Natural killer cell (primary cell): ENCODE measurements at regions of chr3 and their contacts with region 1.

Region 1: GRCh38 chr3:46953234-46954010 is 23.1 kb downstream of the CCDC12 start:
- DNase-seq: peak in 1 of 2 donors; percentile 57
- ATAC-seq: peak; percentile 3 to 48 (median 10)
- H3K4me3 ChIP-seq: no peak overlapping the region
- H3K4me3 Mint-ChIP-seq: peak overlapping the region; percentile 78
- H3K27ac ChIP-seq: peak overlapping the region; percentile 94
- H3K27ac Mint-ChIP-seq: peak overlapping the region; percentile 94 to 99
- H3K4me1 ChIP-seq: peaks cover 98% of the 10 kb centered on the region
- H3K4me1 Mint-ChIP-seq: peaks cover 89 to 95% of the 10 kb centered on the region in 2 donors
- H3K27me3 ChIP-seq: no peaks in the 10 kb centered on the region
- H3K27me3 Mint-ChIP-seq: no peaks in the 10 kb centered on the region
- CTCF ChIP-seq: no peak

Region 2: DNA sequence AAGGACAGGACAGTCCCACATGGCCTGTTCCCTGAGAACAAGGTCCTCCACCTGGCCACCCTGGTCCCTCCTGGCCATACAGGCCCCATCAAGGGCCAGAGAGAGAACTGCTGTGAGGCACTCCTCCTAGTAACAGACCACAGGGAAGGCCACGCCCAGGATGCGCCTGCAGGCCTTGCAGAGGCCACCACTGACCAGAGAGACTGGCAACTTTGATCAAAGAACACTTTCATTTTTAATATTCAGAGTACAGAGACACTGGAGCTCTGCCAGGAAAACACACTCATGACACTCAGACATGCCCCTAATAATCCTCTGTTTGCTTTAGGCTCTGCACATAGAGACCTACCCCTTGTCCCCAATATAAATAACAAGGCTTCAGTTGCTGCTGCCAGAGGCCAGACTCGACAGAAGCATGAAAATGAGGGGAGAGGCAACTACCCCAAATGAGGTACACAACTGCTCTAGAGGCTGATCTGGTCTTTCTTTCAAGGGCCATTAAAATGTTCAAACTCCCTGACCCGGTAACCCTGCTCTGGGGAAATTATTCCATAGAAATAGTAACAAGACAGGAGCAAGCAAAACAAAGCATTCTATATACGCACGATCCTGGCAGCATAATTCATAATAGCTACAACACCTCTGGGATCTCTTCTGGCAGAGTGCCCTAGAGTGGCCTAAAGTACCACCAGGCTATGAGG is 21.6 kb before region 1 on chr3:
- intact Hi-C with region 1: loop called (anchors 2 kb)
- DNase-seq: no peak
- ATAC-seq: peak; percentile 18 to 64 (median 42)
- H3K4me3 ChIP-seq: no peak overlapping the region
- H3K4me3 Mint-ChIP-seq: peak overlapping the region; percentile 82
- H3K27ac ChIP-seq: peak overlapping the region; percentile 82
- H3K27ac Mint-ChIP-seq: peak overlapping the region; percentile 88 to 95
- H3K4me1 ChIP-seq: peaks cover 81% of the 10 kb centered on the region
- H3K4me1 Mint-ChIP-seq: peaks cover 63 to 67% of the 10 kb centered on the region in 2 donors
- H3K27me3 ChIP-seq: no peaks in the 10 kb centered on the region
- H3K27me3 Mint-ChIP-seq: no peaks in the 10 kb centered on the region
- CTCF ChIP-seq: no peak

Region 3: GRCh38 chr3:46965151-46965550 is 11.7 kb after region 1 on chr3:
- intact Hi-C with region 1: no loop called
- DNase-seq: no peak
- ATAC-seq: peak; percentile 39 to 65 (median 56)
- H3K4me3 ChIP-seq: no peak overlapping the region
- H3K4me3 Mint-ChIP-seq: no peak overlapping the region
- H3K27ac ChIP-seq: no peak overlapping the region
- H3K27ac Mint-ChIP-seq: peak overlapping the region; percentile 73 to 93
- H3K4me1 ChIP-seq: peaks cover 63% of the 10 kb centered on the region
- H3K4me1 Mint-ChIP-seq: peaks cover 72 to 75% of the 10 kb centered on the region in 2 donors
- H3K27me3 ChIP-seq: no peaks in the 10 kb centered on the region
- H3K27me3 Mint-ChIP-seq: no peaks in the 10 kb centered on the region
- CTCF ChIP-seq: no peak

Region 4: GRCh38 chr3:47016934-47017435 is 63.6 kb after region 1 on chr3:
- intact Hi-C with region 1: loop called (anchors 2 kb)
- DNase-seq: peak; percentile 45 to 54
- ATAC-seq: peak; percentile 78 to 90 (median 85)
- H3K4me3 ChIP-seq: no peak overlapping the region
- H3K4me3 Mint-ChIP-seq: peak overlapping the region; percentile 55
- H3K27ac ChIP-seq: peak overlapping the region; percentile 60
- H3K27ac Mint-ChIP-seq: peak overlapping the region; percentile 87 to 90
- H3K4me1 ChIP-seq: peaks cover 24% of the 10 kb centered on the region
- H3K4me1 Mint-ChIP-seq: peaks cover 44 to 45% of the 10 kb centered on the region in 2 donors
- H3K27me3 ChIP-seq: no peaks in the 10 kb centered on the region
- H3K27me3 Mint-ChIP-seq: no peaks in the 10 kb centered on the region
- CTCF ChIP-seq: no peak